Prostate gland (tissue), 2 donors: ENCODE measurements at regions of chr5 and their contacts with region 1.

Region 1: GRCh38 chr5:38193015-38193581 is 65.3 kb upstream of the EGFLAM start:
- DNase-seq: peak; percentile 43
- H3K4me3 ChIP-seq: no peak overlapping the region
- H3K27ac ChIP-seq: no peak overlapping the region
- H3K4me1 ChIP-seq: no peaks in the 10 kb centered on the region
- H3K27me3 ChIP-seq: no peaks in the 10 kb centered on the region
- CTCF ChIP-seq: peak; percentile 74 to 89 (median 82)
- POLR2A ChIP-seq: no peak

Region 2: GRCh38 chr5:37412515-37413277 is 780.4 kb before region 1 on chr5:
- intact Hi-C with region 1: loop called (anchors 5 kb)
- DNase-seq: peak; percentile 24
- H3K4me3 ChIP-seq: no peak overlapping the region
- H3K27ac ChIP-seq: no peak overlapping the region
- H3K4me1 ChIP-seq: no peaks in the 10 kb centered on the region
- H3K27me3 ChIP-seq: no peaks in the 10 kb centered on the region
- CTCF ChIP-seq: peak; percentile 57 to 87 (median 72)
- POLR2A ChIP-seq: no peak

Region 3: GRCh38 chr5:37637165-37637845 is 555.8 kb before region 1 on chr5:
- intact Hi-C with region 1: no loop called
- DNase-seq: no peak
- H3K4me3 ChIP-seq: no peak overlapping the region
- H3K27ac ChIP-seq: no peak overlapping the region
- H3K4me1 ChIP-seq: no peaks in the 10 kb centered on the region
- H3K27me3 ChIP-seq: no peaks in the 10 kb centered on the region
- CTCF ChIP-seq: no peak
- POLR2A ChIP-seq: no peak

Region 4: GRCh38 chr5:37837414-37838032 is 355.6 kb before region 1 on chr5:
- intact Hi-C with region 1: loop called (anchors 1 kb)
- DNase-seq: peak; percentile 51
- H3K4me3 ChIP-seq: peak overlapping the region; percentile 33 to 38
- H3K27ac ChIP-seq: peak overlapping the region; percentile 40 to 42
- H3K4me1 ChIP-seq: no peaks in the 10 kb centered on the region
- H3K27me3 ChIP-seq: peaks cover 7% of the 10 kb centered on the region
- CTCF ChIP-seq: peak; percentile 52 to 81 (median 74)
- POLR2A ChIP-seq: no peak